ENCODE measurements at regions of chr21 and their contacts with region 1.

Region 1: DNA sequence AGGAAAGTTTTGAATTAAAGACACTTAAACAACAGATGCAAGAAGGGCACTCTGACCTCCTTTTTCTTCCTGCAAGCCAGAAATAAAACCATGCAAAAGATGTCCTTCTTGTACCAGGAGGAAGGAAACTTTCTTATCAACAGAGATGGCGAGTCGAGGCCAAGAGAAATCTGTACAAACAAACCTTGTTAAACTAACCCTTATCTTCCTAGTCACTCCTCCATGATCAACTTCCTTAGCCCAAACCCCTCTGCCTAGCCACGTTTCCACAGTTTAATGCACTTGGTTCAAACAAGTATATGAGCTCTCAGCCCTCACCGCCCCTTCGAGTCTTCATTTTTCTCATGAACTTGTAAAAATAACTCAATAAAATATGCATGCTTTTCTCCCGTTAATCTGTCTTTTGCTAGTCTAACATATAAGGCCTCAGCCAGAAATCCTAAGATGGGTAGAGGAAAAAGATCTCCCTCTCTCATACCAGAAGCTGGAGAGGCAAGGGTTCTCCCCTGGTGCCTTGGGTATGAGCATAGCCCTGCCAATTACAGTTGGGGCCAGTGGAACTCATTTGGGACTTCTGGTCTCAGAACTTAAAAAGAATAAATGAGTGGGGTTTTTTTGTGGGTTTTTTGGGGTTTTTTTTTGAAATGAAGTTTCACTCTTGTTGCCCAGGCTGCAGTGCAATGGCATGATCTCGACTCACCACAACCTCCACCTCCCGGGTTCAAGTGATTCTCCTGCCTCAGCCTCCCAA is 141.7 kb upstream of the SOD1 start:
- DNase-seq: no peak
- ATAC-seq: no peak
- H3K4me3 ChIP-seq: no peak overlapping the region
- H3K27ac ChIP-seq: no peak overlapping the region
- H3K4me1 ChIP-seq: peaks cover 2% of the 10 kb centered on the region
- H3K27me3 ChIP-seq: no peaks in the 10 kb centered on the region

Region 2: DNA sequence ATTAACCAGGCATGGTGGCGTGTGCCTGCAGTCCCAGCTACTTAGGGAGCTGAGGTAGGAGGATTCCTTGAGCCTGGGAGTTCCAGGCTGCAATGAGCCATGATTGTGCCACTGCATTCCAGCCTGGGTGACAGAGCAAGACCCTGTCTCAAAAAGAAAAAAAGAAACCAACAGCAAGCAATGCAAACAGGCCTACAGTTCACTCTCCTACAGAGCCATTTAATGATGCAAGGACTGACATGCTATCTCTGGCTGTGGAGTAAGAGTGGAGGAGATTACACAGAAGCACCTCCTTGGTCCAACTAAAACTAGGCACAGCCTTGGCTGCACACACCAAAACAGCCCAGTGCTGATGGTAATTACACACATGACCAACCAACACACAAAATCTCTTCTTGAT is 14.1 kb after region 1 on chr21:
- intact Hi-C with region 1: loop called in 1 of 4 experiments (anchors 2 kb)
- DNase-seq: no peak
- ATAC-seq: peak; percentile 70 to 72
- H3K4me3 ChIP-seq: no peak overlapping the region
- H3K27ac ChIP-seq: no peak overlapping the region
- H3K4me1 ChIP-seq: no peaks in the 10 kb centered on the region
- H3K27me3 ChIP-seq: no peaks in the 10 kb centered on the region